H1 (cell line): ENCODE measurements at regions of chr14 and their contacts with region 1.

Region 1: DNA sequence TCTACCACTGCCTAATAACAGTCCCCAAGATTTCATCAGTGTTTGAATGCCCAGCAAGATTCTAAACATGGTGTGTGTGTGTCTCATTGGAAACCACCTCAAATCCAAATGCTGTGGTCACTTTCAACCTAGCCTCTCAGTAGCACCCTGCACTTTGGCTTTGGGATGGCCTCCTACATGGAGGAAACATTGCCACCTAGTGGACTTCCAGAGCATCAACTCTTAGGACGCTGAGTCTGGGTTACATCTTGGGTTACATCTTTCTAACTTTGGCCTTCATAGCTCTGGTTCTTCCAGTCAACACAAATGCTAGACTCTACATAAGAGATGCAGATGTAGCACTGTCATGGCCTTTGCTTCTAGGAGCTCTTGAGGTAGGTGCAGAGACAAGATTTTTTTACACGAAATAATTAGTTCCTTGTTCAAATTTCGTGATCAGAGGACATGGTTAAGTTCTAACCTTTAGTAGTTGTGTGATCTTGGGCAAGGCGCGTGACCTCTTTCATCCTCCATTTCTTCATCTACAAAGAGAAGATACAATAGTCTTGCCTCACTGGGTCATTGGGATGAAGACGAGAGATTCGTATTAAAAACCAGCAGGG is 113.5 kb upstream of the VASH1 start:
- DNase-seq: no peak
- H3K4me3 ChIP-seq: no peak overlapping the region
- H3K27ac ChIP-seq: no peak overlapping the region
- H3K4me1 ChIP-seq: peaks cover 0 to 4% (median 1%) of the 10 kb centered on the region in 4 experiments; a peak in 2 of 7 replicates
- H3K27me3 ChIP-seq: no peaks in the 10 kb centered on the region
- CTCF ChIP-seq: peak; percentile 48 to 98 (median 79)
- EP300 ChIP-seq: no peak
- POLR2A ChIP-seq: no peak
- RAD21 ChIP-seq: peak; percentile 77 to 89

Region 2: DNA sequence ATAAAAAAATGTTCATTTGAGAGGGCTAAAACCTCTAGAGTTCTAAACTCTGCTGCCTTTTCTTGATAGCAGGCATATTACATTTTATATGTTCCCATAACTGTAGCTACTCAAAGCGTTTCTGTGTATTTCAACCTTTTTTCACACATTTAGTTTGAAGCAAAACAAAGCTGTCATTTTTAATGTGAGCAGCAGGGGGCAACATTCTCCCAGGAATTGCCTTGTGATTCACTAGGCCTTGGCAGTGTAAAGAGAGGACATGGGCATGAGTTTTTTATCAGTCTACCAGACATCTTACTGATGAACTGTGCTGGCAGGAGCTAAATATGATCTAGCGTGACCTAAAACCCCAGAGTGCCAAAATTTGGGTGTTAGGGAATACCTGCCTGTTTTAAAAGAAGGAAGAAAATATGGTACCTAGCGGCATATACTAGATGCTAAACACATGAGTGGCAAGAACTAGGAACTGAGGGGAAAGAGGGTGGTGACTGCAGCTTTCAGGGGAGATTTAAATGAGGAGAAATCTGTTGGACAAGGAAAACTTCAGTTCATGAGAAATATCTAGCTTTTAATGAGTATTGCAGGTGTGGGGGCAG is 596.9 kb before region 1 on chr14:
- CTCF ChIA-PET with region 1: interaction called, 32 read pairs
- POLR2A ChIA-PET with region 1: no interaction called
- DNase-seq: peak in 1 of 2 experiments; percentile 79
- H3K4me3 ChIP-seq: no peak overlapping the region
- H3K27ac ChIP-seq: no peak overlapping the region
- H3K4me1 ChIP-seq: peaks cover 2 to 11% (median 5%) of the 10 kb centered on the region in 4 experiments
- H3K27me3 ChIP-seq: no peaks in the 10 kb centered on the region
- CTCF ChIP-seq: peak in 2 of 3 experiments; percentile 77 to 83; a peak in 3 of 4 replicates
- EP300 ChIP-seq: no peak
- POLR2A ChIP-seq: no peak
- RAD21 ChIP-seq: peak; percentile 95 to 96

Region 3: DNA sequence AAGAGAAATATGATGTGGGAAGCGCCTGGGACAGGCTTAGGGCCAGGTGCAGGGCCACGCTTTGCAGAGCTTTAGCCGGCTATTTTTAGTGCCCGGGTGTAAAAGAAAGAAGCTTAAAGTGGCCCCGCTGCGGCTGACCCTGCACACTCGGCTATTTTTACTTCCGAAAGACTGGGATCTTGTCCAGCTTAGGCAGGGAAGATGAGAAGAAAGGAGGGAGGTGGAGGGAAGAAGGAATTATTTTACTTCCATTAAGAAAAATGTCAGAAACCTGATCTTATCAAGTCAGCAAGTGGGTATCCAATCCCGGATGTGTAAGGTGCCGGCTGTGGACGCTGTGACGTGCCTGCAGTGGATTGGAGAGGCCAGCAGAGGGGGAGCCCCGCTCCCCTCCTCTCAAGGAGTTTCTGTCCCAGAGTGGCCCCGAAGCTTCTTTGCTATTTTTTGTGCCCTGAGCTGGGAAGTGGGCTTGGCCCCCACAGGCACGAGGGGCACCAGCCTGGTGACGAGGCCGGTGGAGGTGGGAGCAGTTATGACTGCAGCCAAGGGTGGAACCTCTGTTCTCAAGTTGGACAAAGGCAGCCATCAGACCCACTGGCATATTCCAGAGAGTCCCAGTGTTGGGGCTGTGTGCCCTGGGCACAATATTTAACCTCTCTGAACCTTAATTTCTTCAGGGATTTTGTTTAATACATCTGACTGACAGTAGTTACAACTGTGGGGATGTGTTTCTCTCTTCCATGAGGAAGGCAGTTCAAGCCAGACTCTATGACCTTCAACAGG is 174.1 kb before region 1 on chr14:
- CTCF ChIA-PET with region 1: interaction called, 30 read pairs
- POLR2A ChIA-PET with region 1: no interaction called
- DNase-seq: peak in 1 of 2 experiments; percentile 56
- H3K4me3 ChIP-seq: no peak overlapping the region
- H3K27ac ChIP-seq: no peak overlapping the region
- H3K4me1 ChIP-seq: no peaks in the 10 kb centered on the region; a peak in 1 of 7 replicates
- H3K27me3 ChIP-seq: no peaks in the 10 kb centered on the region
- CTCF ChIP-seq: peak; percentile 51 to 57 (median 57)
- EP300 ChIP-seq: no peak
- POLR2A ChIP-seq: no peak
- RAD21 ChIP-seq: peak; percentile 40 to 57

Region 4: DNA sequence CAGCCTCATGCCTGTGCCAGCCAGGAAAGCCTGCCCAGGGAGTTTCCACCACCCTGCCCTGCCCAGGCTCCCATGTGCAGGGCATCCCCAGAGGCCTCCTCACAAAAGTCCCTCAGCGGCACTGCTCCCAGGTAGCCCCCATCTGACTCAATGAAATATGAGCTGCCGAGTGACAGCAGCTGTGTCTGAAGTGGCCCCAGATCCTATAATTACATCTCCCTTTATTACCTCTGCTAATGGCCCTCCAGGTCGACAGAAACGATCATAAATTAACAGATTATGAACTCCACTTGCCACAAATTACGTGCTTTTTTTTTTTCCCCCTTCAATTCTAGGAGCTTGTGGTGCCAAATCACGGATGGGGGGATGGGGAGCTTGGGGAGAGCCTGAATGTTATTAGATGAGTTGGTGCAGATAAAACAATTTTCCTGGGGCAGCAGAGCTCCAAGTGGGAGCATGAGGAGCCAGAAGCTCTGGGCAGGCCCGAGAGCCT is 161.5 kb before region 1 on chr14:
- CTCF ChIA-PET with region 1: interaction called, 17 read pairs
- POLR2A ChIA-PET with region 1: no interaction called
- DNase-seq: no peak
- H3K4me3 ChIP-seq: no peak overlapping the region
- H3K27ac ChIP-seq: no peak overlapping the region
- H3K4me1 ChIP-seq: peaks cover 0 to 4% (median 3%) of the 10 kb centered on the region in 4 experiments; a peak in 3 of 7 replicates
- H3K27me3 ChIP-seq: no peaks in the 10 kb centered on the region
- CTCF ChIP-seq: no peak
- EP300 ChIP-seq: no peak
- POLR2A ChIP-seq: no peak
- RAD21 ChIP-seq: no peak

Region 5: DNA sequence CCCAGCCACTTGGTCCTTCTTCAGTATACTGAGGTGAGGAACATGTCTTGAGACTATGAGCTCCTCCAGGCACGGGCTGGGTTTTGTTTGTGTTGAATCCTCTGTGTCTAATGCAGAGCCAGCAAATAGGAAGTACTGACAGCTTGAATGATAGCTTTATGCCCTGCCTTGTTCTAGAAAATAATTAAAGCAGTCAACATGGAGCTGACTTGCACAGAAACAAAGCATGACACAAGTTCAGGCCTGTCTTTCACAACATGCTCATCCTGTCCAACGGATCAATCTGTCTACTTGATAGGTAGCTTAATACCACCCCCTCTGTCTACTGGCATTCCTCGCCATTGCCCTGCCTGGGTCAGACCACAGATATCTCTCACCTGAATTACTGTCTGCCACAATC is 130.9 kb before region 1 on chr14:
- CTCF ChIA-PET with region 1: interaction called, 12 read pairs
- POLR2A ChIA-PET with region 1: no interaction called
- DNase-seq: no peak
- H3K4me3 ChIP-seq: no peak overlapping the region
- H3K27ac ChIP-seq: no peak overlapping the region
- H3K4me1 ChIP-seq: no peaks in the 10 kb centered on the region
- H3K27me3 ChIP-seq: no peaks in the 10 kb centered on the region
- CTCF ChIP-seq: no peak
- EP300 ChIP-seq: no peak
- POLR2A ChIP-seq: no peak
- RAD21 ChIP-seq: no peak

Region 6: DNA sequence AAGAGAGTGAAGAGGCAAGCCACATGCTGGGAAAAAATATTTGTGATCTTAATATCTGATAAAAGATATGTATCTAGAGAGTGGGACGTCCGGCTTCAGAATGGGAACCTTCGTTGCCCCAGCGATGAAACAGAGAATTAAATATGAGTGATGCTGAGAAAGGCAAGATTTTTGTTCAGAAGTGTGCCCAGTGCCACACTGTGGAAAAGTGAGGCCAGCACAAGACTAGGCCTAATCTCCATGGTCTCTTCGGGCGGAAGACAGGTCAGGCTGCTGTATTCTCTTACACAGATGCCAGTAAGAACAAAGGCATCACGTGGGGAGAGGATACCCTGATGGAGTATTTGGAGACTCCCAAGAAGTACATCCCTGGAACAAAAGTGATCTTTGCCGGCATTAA is 14.2 kb before region 1 on chr14:
- CTCF ChIA-PET with region 1: interaction called, 12 read pairs
- POLR2A ChIA-PET with region 1: no interaction called
- DNase-seq: no peak
- H3K4me3 ChIP-seq: no peak overlapping the region
- H3K27ac ChIP-seq: no peak overlapping the region
- H3K4me1 ChIP-seq: no peaks in the 10 kb centered on the region
- H3K27me3 ChIP-seq: no peaks in the 10 kb centered on the region
- CTCF ChIP-seq: no peak; a peak in 1 of 4 replicates
- EP300 ChIP-seq: no peak
- POLR2A ChIP-seq: no peak
- RAD21 ChIP-seq: no peak; a peak in 1 of 4 replicates

Region 7: GRCh38 chr14:76664790-76665189 is 17.0 kb after region 1 on chr14:
- CTCF ChIA-PET with region 1: interaction called, 10 read pairs
- POLR2A ChIA-PET with region 1: no interaction called
- DNase-seq: peak in 1 of 2 experiments; percentile 27
- H3K4me3 ChIP-seq: no peak overlapping the region
- H3K27ac ChIP-seq: no peak overlapping the region
- H3K4me1 ChIP-seq: no peaks in the 10 kb centered on the region; a peak in 1 of 7 replicates
- H3K27me3 ChIP-seq: no peaks in the 10 kb centered on the region; a peak in 1 of 7 replicates
- CTCF ChIP-seq: no peak
- EP300 ChIP-seq: no peak
- POLR2A ChIP-seq: no peak
- RAD21 ChIP-seq: no peak